ENCODE measurements at regions of chr15 and their contacts with region 1.

Region 1: GRCh38 chr15:49235446-49236124 is 65.5 kb downstream of the GALK2 start:
- DNase-seq: peak; percentile 44
- H3K4me3 ChIP-seq: no peak overlapping the region; a peak in 1 of 4 replicates
- H3K27ac ChIP-seq: peak overlapping the region; percentile 30 to 86; a peak in 3 of 4 replicates
- H3K4me1 ChIP-seq: peaks cover 28 to 33% of the 10 kb centered on the region in 2 experiments; a peak in 3 of 4 replicates
- H3K27me3 ChIP-seq: no peaks in the 10 kb centered on the region
- CTCF ChIP-seq: peak; percentile 92
- EP300 ChIP-seq: no peak; a peak in 1 of 4 replicates
- RAD21 ChIP-seq: peak; percentile 99

Region 2: DNA sequence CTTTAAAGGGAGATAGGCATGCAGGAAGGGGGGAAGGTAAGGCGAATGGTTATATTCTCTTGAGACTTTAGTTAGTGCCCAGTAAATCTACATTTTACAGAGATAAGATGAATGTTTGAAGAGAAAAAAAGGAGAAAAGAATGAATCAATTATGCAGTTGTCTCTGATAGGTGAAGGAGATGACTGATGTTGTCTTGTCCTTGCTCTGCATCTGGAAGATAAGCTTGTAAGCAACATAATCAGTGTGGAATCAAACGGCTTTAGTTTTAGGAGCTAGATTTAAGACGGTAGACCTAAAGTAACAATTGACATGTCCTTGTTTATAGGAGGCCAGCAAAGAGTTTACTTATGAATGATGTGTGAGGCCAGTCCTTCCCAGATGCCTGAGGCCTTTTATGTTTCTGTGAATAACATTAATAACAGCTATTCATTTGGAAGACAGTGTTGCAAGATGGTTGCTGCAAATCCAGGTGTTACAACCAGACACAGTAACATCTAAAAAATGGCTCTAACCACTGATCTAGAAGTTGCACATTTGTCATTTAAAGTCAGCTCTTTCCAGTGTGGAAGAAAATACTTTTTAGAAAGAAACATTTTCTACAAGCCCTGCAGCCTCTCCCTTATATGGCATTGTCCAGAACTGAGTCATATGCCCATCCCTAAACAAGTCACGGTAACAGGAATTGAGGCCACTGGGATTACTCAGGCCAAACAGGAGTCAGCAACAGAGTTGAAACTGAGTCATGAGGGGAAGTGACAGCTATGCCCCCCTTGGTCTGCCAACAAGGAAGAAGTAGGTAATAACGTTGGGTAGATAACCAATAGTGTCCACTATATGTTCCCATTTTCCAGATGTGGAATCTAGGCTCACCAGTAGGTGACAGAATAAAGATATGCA is 512.6 kb before region 1 on chr15:
- CTCF ChIA-PET with region 1: no interaction called
- POLR2A ChIA-PET with region 1: no interaction called
- DNase-seq: no peak
- H3K4me3 ChIP-seq: no peak overlapping the region
- H3K27ac ChIP-seq: peak overlapping the region in 1 of 2 experiments; percentile 17; a peak in 1 of 4 replicates
- H3K4me1 ChIP-seq: peaks cover 0 to 17% of the 10 kb centered on the region in 2 experiments; a peak in 2 of 4 replicates
- H3K27me3 ChIP-seq: no peaks in the 10 kb centered on the region
- CTCF ChIP-seq: no peak
- EP300 ChIP-seq: peak in 1 of 2 experiments; percentile 59; a peak in 1 of 4 replicates
- RAD21 ChIP-seq: no peak

Region 3: GRCh38 chr15:49134683-49135341 is 100.8 kb before region 1 on chr15:
- CTCF ChIA-PET with region 1: no interaction called
- POLR2A ChIA-PET with region 1: no interaction called
- DNase-seq: no peak
- H3K4me3 ChIP-seq: no peak overlapping the region
- H3K27ac ChIP-seq: peak overlapping the region in 1 of 2 experiments; percentile 77; a peak in 2 of 4 replicates
- H3K4me1 ChIP-seq: peaks cover 0 to 40% of the 10 kb centered on the region in 2 experiments; a peak in 2 of 4 replicates
- H3K27me3 ChIP-seq: no peaks in the 10 kb centered on the region
- CTCF ChIP-seq: no peak
- EP300 ChIP-seq: no peak
- RAD21 ChIP-seq: no peak

Region 4: GRCh38 chr15:49185473-49185872 is 50.1 kb before region 1 on chr15:
- CTCF ChIA-PET with region 1: no interaction called
- POLR2A ChIA-PET with region 1: no interaction called
- DNase-seq: no peak
- H3K4me3 ChIP-seq: no peak overlapping the region
- H3K27ac ChIP-seq: no peak overlapping the region
- H3K4me1 ChIP-seq: no peaks in the 10 kb centered on the region; a peak in 1 of 4 replicates
- H3K27me3 ChIP-seq: no peaks in the 10 kb centered on the region
- CTCF ChIP-seq: no peak
- EP300 ChIP-seq: no peak
- RAD21 ChIP-seq: no peak

Region 5: DNA sequence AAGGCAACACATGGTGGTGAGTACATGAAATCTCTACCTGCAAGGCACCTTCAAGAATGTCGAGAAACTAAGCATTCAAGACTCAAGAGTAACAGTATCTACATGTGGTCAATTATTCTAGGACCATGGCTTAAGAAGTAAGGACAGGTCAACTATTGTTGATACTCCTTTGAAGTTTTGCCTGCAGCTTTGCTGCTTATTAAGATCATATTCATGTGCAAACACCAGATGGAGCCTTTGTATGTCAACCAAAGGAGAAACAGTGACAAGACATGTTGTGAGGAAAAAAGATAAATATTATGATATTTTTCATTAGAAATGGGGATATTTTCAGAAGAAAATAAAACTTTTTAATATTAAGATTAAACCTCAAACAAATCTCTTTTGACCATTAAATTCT is 135.2 kb after region 1 on chr15:
- CTCF ChIA-PET with region 1: interaction called, 11 read pairs
- POLR2A ChIA-PET with region 1: no interaction called
- DNase-seq: no peak
- H3K4me3 ChIP-seq: no peak overlapping the region
- H3K27ac ChIP-seq: no peak overlapping the region
- H3K4me1 ChIP-seq: no peaks in the 10 kb centered on the region
- H3K27me3 ChIP-seq: no peaks in the 10 kb centered on the region
- CTCF ChIP-seq: peak; percentile 53
- EP300 ChIP-seq: no peak
- RAD21 ChIP-seq: peak; percentile 64

Region 6: DNA sequence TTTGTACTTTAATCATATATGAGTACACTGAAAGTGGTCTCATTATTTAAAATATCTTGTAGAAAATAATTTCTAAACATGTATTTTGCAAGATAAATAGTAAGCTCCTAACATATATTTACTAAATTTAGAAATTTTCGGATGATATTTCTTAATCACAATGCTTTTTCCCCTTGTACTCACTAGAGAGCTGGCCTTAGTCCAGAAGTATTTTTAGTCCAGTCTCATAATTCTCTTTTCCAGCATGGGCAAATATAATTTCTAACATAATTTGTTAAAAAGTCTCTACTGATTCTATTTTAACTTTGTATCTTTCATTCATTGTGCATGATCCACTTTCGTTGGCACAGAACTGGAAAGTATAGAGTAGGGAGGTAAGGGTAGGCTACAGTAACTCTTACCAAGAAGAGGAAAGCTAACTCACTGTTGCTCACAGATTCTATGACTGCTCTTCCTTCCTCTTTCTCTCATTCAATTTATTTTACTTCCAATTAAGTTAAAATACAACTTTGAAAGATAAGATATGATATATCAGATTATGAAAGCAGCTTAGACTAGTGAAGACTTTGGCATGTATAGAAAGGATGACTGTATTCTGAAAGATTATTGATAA is 226.8 kb after region 1 on chr15:
- CTCF ChIA-PET with region 1: interaction called, 13 read pairs
- POLR2A ChIA-PET with region 1: no interaction called
- DNase-seq: no peak
- H3K4me3 ChIP-seq: no peak overlapping the region
- H3K27ac ChIP-seq: peak overlapping the region in 1 of 2 experiments; percentile 50; a peak in 1 of 4 replicates
- H3K4me1 ChIP-seq: peaks cover 4 to 13% of the 10 kb centered on the region in 2 experiments; a peak in 3 of 4 replicates
- H3K27me3 ChIP-seq: no peaks in the 10 kb centered on the region
- CTCF ChIP-seq: no peak
- EP300 ChIP-seq: no peak
- RAD21 ChIP-seq: no peak

Region 7: DNA sequence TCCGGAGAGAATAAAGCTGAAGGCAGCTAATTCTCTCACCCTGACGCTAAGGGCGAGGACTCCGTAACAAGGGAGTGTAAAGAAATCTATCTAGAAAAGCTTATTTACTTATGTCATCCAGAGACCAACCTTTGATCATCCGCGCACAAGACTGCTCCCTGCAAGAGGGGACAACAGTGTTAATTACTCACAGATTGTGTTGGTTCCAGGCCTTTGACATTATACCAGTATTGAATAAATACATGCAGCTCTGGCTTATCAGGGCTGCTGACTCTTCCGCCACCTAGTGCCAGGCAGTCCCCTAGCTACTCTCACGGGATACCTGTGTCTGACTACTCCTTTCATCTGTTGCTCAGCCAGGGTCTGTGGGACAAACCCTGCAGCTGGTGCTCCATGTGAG is 596.9 kb after region 1 on chr15:
- CTCF ChIA-PET with region 1: interaction called, 10 read pairs
- POLR2A ChIA-PET with region 1: no interaction called
- DNase-seq: peak; percentile 5
- H3K4me3 ChIP-seq: no peak overlapping the region
- H3K27ac ChIP-seq: no peak overlapping the region
- H3K4me1 ChIP-seq: no peaks in the 10 kb centered on the region; a peak in 1 of 4 replicates
- H3K27me3 ChIP-seq: no peaks in the 10 kb centered on the region
- CTCF ChIP-seq: no peak; the same call in 1 of the 2 replicates
- EP300 ChIP-seq: no peak
- RAD21 ChIP-seq: peak; percentile 68

Region 8: GRCh38 chr15:50003786-50004334 is 768.3 kb after region 1 on chr15:
- CTCF ChIA-PET with region 1: interaction called, 116 read pairs
- POLR2A ChIA-PET with region 1: interaction called, 3 read pairs
- DNase-seq: peak; percentile 68
- H3K4me3 ChIP-seq: no peak overlapping the region
- H3K27ac ChIP-seq: no peak overlapping the region; a peak in 1 of 4 replicates
- H3K4me1 ChIP-seq: no peaks in the 10 kb centered on the region; a peak in 1 of 4 replicates
- H3K27me3 ChIP-seq: no peaks in the 10 kb centered on the region
- CTCF ChIP-seq: peak; percentile 71
- EP300 ChIP-seq: no peak
- RAD21 ChIP-seq: peak; percentile 93

Region 9: DNA sequence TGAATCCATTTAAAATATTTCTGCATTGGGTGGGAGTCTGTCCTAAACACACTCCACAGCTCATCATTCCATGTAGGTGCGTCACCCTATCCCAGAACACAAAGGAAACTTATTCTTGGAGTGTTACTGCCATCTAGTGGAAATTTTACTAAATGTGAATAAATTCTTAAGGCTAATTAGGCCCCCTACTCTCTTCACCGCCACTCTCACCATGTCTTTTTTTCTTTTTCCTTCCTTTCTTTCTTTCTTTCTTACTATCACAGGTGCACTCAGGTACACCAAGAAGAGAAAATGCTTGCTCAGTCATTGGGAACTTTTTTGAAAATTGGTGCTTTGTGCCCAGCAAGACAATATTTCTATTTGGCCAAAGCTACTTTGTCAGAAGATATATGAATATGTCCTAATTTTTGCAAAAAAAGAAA is 909.9 kb after region 1 on chr15:
- CTCF ChIA-PET with region 1: interaction called, 27 read pairs
- POLR2A ChIA-PET with region 1: interaction called, 4 read pairs
- DNase-seq: peak; percentile 67
- H3K4me3 ChIP-seq: no peak overlapping the region; a peak in 1 of 4 replicates
- H3K27ac ChIP-seq: no peak overlapping the region
- H3K4me1 ChIP-seq: no peaks in the 10 kb centered on the region; a peak in 1 of 4 replicates
- H3K27me3 ChIP-seq: no peaks in the 10 kb centered on the region
- CTCF ChIP-seq: peak; percentile 70
- EP300 ChIP-seq: no peak
- RAD21 ChIP-seq: peak; percentile 84

Measured in SK-N-SH (cell line).